ENCODE measurements at regions of chrX and their contacts with region 1.

Region 1: GRCh38 chrX:11533211-11533651 is 132.5 kb downstream of the ARHGAP6 start:
- DNase-seq: no peak
- ATAC-seq: peak; percentile 89 to 91 (median 90)
- H3K4me3 ChIP-seq: no peak overlapping the region
- H3K27ac ChIP-seq: no peak overlapping the region
- H3K4me1 ChIP-seq: peaks cover 5% of the 10 kb centered on the region
- H3K27me3 ChIP-seq: peaks cover 0 to 1% (median 0%) of the 10 kb centered on the region in 3 donors
- CTCF ChIP-seq: peak; percentile 91

Region 2: DNA sequence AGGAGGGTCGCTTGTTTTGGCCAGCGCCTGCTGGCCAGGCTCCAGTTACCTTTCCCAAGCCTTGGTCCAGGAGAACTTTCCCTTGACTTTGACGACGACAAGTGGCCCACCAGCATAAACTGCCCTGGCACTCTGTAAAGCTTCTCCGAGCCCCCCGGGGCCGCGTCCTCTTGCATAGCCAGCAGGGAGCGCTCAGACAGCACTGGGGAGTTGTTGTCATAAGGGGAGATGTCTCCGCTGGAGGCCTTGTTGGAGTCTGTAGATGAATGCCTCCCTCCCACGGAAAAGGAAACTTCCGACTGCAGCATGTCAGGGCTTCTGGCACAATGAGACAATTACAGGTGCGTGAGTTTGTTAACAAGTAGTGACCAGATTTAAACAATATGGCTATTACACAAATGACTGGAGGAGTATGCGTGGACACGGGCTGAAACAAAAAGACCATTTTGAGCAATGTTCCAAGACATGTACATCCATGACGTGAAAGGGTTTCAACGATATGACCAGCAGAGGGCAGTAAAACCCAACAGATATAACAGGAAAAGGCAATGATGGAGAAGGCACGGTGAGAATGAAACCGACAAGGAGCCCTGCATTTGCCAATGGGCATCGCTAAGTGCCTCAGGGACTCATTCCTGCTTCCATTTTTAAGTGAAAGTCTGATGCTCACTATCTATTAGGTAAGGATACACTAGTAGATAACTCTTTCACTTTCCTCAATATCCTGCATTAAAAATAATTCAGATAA is 389.1 kb before region 1 on chrX:
- intact Hi-C with region 1: loop called (anchors 5 to 10 kb)
- DNase-seq: peak in 1 of 2 donors; percentile 51
- ATAC-seq: peak; percentile 73 to 88 (median 78)
- H3K4me3 ChIP-seq: no peak overlapping the region
- H3K27ac ChIP-seq: no peak overlapping the region
- H3K4me1 ChIP-seq: no peaks in the 10 kb centered on the region
- H3K27me3 ChIP-seq: peaks cover 0 to 2% (median 0%) of the 10 kb centered on the region in 3 donors
- CTCF ChIP-seq: peak; percentile 65

Region 3: GRCh38 chrX:11566789-11567188 is 33.6 kb after region 1 on chrX:
- intact Hi-C with region 1: no loop called
- DNase-seq: no peak
- ATAC-seq: no peak
- H3K4me3 ChIP-seq: no peak overlapping the region
- H3K27ac ChIP-seq: no peak overlapping the region
- H3K4me1 ChIP-seq: no peaks in the 10 kb centered on the region
- H3K27me3 ChIP-seq: no peaks in the 10 kb centered on the region
- CTCF ChIP-seq: no peak

Region 4: DNA sequence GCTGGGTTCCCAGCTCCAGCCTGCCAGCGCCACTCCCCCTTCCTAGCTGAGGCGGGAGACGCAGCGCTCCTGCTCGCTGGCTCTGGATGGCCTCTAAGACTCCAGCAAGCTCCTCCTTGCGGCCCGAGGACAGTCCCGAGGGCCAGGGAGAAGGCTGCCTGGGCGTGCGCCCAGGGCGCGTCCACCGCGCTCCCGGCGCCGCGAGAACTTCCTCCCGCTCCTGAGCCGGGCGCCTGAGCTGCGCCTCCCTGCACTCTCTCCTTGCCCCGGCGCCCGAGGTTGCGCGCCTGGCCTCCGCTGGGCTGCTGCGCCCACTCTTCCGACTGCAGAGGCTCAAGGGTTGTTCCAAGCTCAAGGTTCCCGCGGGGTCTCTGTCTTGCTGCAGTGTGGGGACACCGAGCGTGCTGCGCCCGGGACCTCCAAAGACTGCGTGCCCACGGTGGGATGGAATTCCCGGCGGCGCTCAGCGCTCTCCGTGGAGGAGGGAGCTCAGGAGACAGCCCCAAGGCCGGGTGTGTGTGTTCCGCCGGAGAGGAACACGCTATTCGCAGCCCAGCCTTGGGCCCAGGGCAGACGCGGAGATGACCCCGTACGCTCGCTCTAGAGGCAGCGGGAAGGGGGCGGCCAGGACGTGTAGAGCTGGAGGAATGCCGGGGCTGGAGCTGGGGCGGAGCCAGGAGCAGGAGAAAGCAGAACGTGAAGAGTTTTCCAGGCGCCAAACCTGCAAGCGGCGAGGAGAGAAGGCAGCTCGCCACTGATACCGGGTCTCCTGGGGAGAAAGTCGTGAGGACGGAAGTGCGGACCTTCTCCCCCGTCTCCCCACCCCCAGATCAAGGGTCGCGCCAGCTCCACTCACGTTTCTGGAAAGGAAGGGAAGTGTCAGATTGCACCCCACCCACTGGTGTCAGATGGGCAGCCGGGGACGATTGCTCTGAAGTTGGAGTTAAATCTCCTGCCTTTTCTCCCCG is 132.2 kb after region 1 on chrX and contains the start of gene ARHGAP6:
- intact Hi-C with region 1: loop called in 1 of 2 experiments (anchors 10 kb)
- DNase-seq: peak; percentile 49 to 82
- ATAC-seq: peak; percentile 70 to 84 (median 82)
- H3K4me3 ChIP-seq: peak within 1 kb of the TSS; percentile 73
- H3K27ac ChIP-seq: peak within 1 kb of the TSS; percentile 75
- H3K4me1 ChIP-seq: no peaks in the 10 kb centered on the region
- H3K27me3 ChIP-seq: no peaks in the 10 kb centered on the region
- CTCF ChIP-seq: no peak
- total RNA-seq, gene ARHGAP6: 4.8 to 20.6 (median 11.3) TPM

Region 5: DNA sequence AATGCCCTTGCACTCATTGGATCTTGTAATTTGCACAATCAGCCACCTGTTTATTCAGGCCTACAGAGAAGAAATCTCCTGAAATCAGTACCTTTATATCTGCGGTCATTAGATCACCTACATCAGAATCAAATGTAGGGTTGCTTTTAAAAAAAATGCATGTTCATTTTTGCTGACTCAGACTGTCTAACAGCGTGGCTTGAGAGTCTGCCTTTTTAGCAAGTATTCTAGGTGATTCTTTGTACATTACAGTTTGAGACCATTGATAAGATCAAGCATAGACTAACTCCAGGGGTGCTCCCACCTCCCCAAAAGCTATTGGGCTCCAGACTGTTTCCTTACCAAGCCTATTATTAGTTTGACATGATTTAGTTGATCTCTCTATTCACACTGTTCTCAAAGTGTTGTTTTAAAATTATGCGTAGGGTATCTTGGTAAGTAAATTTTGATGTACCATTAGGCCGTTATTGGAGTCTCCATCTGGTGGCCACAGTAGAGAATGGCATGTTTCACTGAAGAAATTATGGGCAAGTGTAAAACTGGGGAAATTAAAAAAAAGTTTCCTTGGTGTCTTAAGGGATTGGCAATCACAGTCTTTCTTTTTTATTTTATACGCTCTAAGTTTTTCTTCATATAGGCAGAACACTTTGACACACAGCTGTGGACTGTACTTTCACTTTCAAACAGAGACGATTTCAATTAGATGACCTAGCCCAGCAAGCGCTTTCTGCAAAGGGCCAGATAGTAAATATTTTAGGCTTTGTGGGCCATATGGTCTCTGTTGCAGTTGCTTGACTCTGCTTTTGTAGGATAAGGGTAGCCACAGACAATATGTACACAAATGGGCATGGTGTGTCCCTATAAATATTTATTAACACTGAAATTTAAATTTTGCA is 191.1 kb after region 1 on chrX:
- intact Hi-C with region 1: loop called (anchors 1 to 2 kb)
- DNase-seq: no peak
- ATAC-seq: peak in 3 of 4 donors; percentile 59 to 83 (median 63)
- H3K4me3 ChIP-seq: no peak overlapping the region
- H3K27ac ChIP-seq: no peak overlapping the region
- H3K4me1 ChIP-seq: peaks cover 13% of the 10 kb centered on the region
- H3K27me3 ChIP-seq: no peaks in the 10 kb centered on the region
- CTCF ChIP-seq: peak; percentile 73

Region 6: DNA sequence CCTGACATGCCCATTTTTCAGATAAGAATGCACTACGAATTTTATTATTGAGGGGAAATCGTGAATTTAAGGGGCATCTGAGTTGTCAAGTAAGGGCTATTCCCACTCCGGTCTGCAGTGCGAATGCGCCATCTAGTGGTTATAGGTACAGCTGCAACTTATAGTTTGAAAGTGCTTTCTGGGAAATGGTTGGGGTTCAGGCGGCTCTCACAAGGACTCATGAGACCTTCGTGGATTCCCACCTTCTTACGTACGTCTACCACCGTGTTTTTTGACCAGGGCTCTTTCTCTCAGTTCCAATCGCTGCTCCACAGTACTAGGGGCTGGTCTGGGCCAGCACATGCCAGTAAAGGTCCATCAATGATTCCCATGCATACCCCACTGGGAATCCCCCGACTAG is 237.1 kb after region 1 on chrX:
- intact Hi-C with region 1: loop called (anchors 2 to 5 kb)
- DNase-seq: no peak
- ATAC-seq: peak; percentile 68 to 87 (median 76)
- H3K4me3 ChIP-seq: no peak overlapping the region
- H3K27ac ChIP-seq: no peak overlapping the region
- H3K4me1 ChIP-seq: no peaks in the 10 kb centered on the region
- H3K27me3 ChIP-seq: no peaks in the 10 kb centered on the region
- CTCF ChIP-seq: peak; percentile 83

Measured in psoas muscle (tissue), 8 donors.